HAP-1 (cell line): ENCODE measurements at regions of chr3 and their contacts with region 1.

Region 1: DNA sequence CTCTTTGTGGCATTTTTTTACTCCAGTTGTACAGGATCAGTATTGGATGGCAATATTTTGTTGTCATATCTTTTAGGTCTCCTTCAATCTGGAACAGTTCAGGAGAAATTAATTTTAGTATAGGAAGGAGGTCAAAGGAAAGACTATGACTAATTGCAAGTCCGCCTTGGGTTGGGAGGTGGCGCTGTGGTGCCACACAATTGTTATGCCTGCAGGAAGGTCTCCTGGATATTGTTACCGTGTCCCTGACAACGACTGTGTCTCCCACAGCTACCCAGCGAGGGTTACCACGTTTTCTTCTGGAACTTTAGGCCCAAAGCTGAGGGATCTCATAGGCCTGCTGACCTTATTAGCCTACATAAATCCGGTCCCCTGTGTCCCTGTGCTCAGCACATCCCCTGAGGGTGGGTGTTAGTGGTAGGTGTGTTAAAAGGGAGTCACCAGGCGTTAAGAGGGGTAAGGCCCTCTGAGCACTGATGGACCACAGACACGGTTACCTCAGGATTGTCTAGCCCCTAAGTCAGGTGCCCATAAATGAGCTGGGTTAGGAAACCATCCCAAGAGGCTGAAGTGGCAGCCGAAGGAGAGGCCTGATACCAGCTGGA is 31.5 kb downstream of the KCNAB1 start:
- DNase-seq: peak; percentile 57 to 80
- H3K4me3 ChIP-seq: no peak overlapping the region
- H3K4me1 ChIP-seq: no peaks in the 10 kb centered on the region
- H3K27me3 ChIP-seq: peaks cover 2% of the 10 kb centered on the region; the same call in 1 of the 2 replicates

Region 2: DNA sequence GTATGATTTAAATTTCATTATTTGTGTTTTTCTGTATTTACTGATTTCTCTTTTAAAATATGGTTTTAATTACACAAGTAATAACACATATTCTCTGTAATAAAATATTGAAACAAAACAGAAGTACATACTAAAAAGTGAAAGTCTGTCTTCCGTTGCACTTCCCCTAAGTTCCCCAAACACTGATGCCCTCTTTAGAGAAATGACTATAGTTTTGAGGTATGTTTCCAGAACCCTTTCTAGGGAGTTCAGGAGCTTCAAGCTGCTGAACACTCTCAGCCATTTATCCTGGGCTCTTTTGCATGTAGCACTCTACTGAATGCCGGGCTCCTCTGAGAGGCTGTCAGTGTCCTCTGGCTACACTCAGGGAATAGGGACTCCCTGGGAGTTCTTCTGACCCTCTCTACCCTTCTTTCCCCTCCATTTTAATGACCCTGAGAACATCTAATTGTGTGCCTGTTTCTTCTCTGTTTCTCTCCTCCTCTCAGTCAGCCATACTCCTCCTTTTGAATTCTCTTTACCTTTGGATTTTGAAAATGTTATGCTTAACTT is 91.9 kb before region 1 on chr3:
- in situ Hi-C with region 1: no loop called
- DNase-seq: no peak
- H3K4me3 ChIP-seq: no peak overlapping the region
- H3K4me1 ChIP-seq: no peaks in the 10 kb centered on the region
- H3K27me3 ChIP-seq: peaks cover 20% of the 10 kb centered on the region

Region 3: DNA sequence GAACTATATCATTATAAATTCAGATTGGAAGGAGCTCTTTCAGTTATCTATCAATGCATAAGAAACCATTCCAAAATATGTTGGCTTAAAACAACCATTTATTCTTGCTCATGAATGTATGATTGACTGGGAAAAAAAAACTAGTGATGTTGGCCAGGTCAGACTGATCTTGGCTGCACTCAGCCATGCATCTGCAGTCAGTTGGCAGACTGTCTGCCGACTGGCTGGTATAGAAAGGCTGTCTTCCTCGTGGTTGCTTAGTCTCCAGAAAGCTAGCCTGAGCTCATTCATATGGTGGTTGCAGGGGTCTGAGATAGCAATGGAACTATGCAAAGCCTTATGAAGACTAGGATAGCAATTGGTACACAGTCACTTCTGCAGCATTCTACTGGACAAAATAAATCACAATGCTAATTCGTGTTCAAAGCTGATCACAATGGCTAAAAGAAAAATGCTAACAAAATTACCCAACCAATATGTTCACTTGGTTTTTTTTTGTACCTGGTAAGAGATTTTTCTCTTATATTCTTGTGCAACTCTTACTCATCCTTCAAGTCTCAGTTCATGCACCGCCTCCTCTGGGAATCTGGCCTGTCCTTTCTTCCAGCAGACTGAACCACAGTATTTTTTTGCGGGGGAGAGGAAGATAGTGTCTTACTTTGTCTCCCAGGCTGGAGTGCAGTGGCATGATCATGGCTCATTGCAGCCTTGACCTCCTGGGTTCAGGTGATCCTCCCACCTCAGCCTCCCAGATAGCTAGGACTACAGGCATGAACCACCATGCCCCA is 95.2 kb after region 1 on chr3:
- in situ Hi-C with region 1: no loop called
- DNase-seq: no peak
- H3K4me3 ChIP-seq: no peak overlapping the region
- H3K4me1 ChIP-seq: peaks cover 10% of the 10 kb centered on the region
- H3K27me3 ChIP-seq: no peaks in the 10 kb centered on the region

Region 4: GRCh38 chr3:156323466-156323865 is 171.5 kb after region 1 on chr3:
- in situ Hi-C with region 1: no loop called
- DNase-seq: no peak
- H3K4me3 ChIP-seq: no peak overlapping the region
- H3K4me1 ChIP-seq: no peaks in the 10 kb centered on the region
- H3K27me3 ChIP-seq: no peaks in the 10 kb centered on the region; the same call in 1 of the 2 replicates

Region 5: DNA sequence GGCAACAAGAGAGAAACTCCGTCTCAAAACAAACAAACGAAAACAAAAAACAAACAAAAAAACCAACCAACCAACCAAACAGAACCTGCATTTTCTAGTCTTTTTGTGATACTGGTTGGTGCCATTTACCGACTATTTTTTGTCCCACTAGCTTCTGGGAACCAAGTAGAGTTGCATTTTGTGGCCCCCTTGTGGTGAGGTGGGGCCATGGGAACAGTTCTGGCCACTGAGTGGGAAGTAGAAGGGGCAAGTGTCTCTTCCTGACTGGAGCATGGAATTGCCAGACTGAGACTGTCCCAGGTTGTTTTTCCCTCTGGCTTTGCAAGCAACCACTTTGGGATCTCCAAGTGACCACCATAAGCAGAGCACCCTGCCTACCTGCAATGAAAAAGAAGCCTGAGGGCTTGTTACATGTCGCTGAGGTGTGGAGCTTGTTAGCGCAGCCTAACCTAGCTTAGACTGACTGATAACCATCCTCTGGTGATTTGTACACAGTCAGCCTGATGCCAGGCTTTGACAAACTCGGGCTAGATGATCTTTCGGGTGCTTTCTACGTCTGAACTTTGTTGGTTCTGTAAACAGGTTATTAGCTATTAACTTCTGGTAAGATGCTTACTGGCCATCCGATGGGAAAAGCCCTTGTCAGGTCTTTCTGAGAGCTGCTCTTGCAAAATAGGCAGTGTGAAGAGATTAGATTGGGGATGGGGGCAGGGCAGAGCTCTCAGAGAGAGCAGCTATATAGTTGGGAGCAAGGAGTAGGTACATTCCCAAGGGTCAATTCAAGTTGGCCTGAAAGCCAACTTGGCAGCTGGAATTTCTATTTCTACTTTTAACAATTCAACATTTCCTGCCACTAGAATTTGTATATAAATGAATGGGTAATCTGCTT is 230.8 kb after region 1 on chr3:
- in situ Hi-C with region 1: loop called (anchors 10 kb)
- DNase-seq: peak; percentile 47 to 72
- H3K4me3 ChIP-seq: no peak overlapping the region
- H3K4me1 ChIP-seq: no peaks in the 10 kb centered on the region
- H3K27me3 ChIP-seq: peaks cover 21% of the 10 kb centered on the region

Region 6: DNA sequence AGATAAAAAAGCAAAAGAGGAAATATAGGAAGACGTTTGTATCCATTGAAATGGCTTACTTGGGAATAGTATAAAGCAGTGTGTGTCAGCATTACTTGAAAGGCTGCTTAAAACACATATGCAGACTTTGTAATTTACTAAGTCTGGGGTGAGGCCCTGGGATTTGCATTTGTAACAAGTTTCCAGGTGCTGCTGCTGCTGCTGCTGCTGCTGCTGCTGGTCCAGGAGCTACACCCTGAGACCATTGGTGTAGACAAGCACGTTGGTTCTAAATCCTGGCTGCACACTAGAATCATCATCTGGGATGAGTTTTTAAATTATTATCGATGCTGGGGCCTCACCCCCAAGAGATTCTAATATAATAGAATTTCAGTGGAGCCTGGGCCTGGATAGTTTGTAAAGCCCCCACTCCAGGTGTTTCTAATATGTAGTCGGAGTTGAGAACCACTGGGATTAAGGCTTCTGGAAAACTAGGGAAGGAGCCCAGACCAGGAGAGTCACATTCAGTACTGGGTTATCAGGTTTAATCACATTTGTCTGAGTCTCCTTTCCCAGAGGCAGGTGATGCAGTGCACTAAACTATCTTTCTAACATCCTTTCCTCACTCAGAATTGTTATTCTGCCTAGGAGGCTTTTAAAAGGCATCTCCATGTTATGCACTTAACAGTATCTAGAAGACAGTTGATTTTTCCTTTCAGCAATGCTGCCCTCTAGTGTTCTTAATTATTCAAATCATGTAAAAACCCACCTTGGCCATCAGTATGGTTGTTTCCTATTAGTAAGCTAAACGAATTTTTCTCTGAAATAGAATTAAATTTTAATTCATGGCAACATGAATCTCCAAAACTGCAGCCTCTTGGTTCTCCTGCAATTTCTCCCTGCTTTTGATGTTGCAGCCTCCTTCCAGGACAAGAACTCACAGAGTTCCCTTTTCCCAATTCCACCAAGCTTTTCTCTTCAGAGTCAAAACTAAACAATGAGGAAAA is 357.6 kb after region 1 on chr3:
- in situ Hi-C with region 1: loop called (anchors 25 kb)
- DNase-seq: peak in 1 of 2 experiments; percentile 47
- H3K4me3 ChIP-seq: no peak overlapping the region
- H3K4me1 ChIP-seq: no peaks in the 10 kb centered on the region
- H3K27me3 ChIP-seq: peaks cover 30% of the 10 kb centered on the region